Activated T-helper 1 cell treated with anti-CD3 and anti-CD28 coated beads, Interleukin-12 subunit alpha, Interleukin-12 subunit beta, Interleukin-2, Interleukin-4 antibody, amounts not matched to agents 30 ng/mL and 10 ng/mL and 1 ng/mL, durations not matched to agents 14 hours and 24 hours and 36 hours (primary cell): ENCODE measurements at regions of chr17 and their contacts with region 1.

Region 1: GRCh38 chr17:32755045-32755805 is 121.7 kb downstream of the MYO1D start:
- DNase-seq: no peak
- H3K4me3 Mint-ChIP-seq: no peak overlapping the region
- H3K27ac Mint-ChIP-seq: no peak overlapping the region
- H3K4me1 Mint-ChIP-seq: peaks cover 5% of the 10 kb centered on the region
- H3K27me3 Mint-ChIP-seq: peaks cover 3% of the 10 kb centered on the region

Region 2: GRCh38 chr17:32659419-32659842 is 95.8 kb before region 1 on chr17:
- intact Hi-C with region 1: loop called (anchors 1 kb)
- DNase-seq: peak; percentile 43
- H3K4me3 Mint-ChIP-seq: no peak overlapping the region
- H3K27ac Mint-ChIP-seq: no peak overlapping the region
- H3K4me1 Mint-ChIP-seq: no peaks in the 10 kb centered on the region
- H3K27me3 Mint-ChIP-seq: peaks cover 2% of the 10 kb centered on the region

Region 3: GRCh38 chr17:32723310-32723955 is 31.8 kb before region 1 on chr17:
- intact Hi-C with region 1: no loop called
- DNase-seq: no peak
- H3K4me3 Mint-ChIP-seq: no peak overlapping the region
- H3K27ac Mint-ChIP-seq: no peak overlapping the region
- H3K4me1 Mint-ChIP-seq: no peaks in the 10 kb centered on the region
- H3K27me3 Mint-ChIP-seq: peaks cover 5% of the 10 kb centered on the region